Transverse colon (tissue), 4 donors: ENCODE measurements at regions of chr7 and their contacts with region 1.

Region 1: GRCh38 chr7:38796626-38797501 is 112.1 kb downstream of the VPS41 start:
- DNase-seq: peak; percentile 44
- H3K4me3 ChIP-seq: no peak overlapping the region
- H3K27ac ChIP-seq: no peak overlapping the region
- H3K4me1 ChIP-seq: no peaks in the 10 kb centered on the region
- H3K27me3 ChIP-seq: no peaks in the 10 kb centered on the region
- CTCF ChIP-seq: peak; percentile 63 to 79 (median 73)
- EP300 ChIP-seq: no peak
- POLR2A ChIP-seq: no peak

Region 2: GRCh38 chr7:38775506-38776175 is 21.2 kb before region 1 on chr7:
- in situ Hi-C with region 1: no loop called
- intact Hi-C with region 1: no loop called
- DNase-seq: no peak
- H3K4me3 ChIP-seq: no peak overlapping the region
- H3K27ac ChIP-seq: no peak overlapping the region
- H3K4me1 ChIP-seq: no peaks in the 10 kb centered on the region
- H3K27me3 ChIP-seq: no peaks in the 10 kb centered on the region
- CTCF ChIP-seq: no peak
- EP300 ChIP-seq: no peak
- POLR2A ChIP-seq: no peak

Region 3: DNA sequence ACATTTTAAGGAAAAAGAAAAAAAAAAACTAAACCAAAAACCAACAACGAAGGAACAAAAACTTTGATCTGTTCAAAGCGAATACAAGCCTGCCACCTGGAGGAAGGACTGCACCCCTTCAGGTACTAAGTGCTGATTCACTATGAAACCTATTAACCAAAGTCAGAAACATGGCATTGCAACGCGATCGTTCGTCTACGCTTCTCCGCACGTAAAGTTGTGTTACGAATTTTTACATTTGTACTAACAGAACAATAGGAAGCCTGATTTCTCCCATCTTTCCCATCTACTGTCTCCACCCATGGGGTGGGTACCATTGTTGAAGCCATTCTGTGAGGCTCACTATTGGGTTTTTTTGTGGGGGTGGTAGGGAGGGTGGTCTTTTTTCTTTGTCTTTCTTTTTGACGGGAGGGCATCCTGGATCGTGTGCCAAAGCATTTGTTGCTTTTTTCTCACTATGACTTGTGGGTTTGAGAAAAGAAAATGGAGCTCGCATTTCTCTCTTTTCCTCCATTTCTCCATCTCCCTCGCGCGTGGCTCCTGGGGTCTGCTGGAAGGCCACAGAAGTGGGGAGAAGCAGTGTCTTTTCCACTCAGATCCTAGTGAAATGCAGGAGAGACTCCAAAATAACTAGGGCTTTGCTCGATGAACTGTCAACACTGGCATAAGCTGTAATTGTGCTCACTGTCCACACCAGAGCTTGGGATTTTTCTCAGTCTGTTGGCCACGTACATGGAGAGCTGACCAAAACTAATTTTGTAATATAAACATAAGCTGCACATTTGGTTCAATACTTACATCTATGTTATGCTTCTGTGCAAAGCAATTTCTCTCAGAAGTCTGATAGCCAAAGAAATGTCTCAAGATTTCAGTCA is 668.4 kb after region 1 on chr7:
- in situ Hi-C with region 1: loop called in 2 of 4 experiments (anchors 25 kb)
- intact Hi-C with region 1: loop called (anchors 10 kb)
- DNase-seq: peak; percentile 50
- H3K4me3 ChIP-seq: peak overlapping the region in 1 of 4 donors; percentile 10
- H3K27ac ChIP-seq: no peak overlapping the region
- H3K4me1 ChIP-seq: peaks cover 0 to 20% (median 8%) of the 10 kb centered on the region in 4 donors
- H3K27me3 ChIP-seq: peaks cover 25% of the 10 kb centered on the region
- CTCF ChIP-seq: peak; percentile 71 to 78 (median 74)
- EP300 ChIP-seq: no peak
- POLR2A ChIP-seq: no peak

Region 4: DNA sequence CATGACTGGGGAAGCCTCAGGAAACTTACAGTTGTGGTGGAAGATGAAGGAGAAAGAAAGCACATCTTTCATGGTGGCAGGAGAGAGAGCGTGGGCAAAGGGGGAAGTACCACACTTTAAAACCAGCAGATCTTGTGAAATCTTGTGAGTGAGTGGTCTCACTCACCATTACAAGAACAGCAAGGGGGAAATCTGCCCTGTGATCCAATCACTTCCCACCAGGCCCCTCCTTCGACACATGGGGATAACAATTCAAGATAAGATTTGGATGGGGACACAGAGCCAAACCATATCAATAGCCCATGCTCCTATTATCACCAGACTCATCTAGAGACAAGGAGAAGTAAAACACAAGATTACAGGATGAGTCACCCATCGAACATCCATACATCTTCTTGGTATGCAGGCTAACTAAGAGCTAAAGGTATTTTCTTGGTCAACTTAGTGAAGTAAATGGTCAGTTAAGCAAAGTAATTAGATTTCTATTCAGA is 714.0 kb after region 1 on chr7:
- in situ Hi-C with region 1: loop called in 2 of 4 experiments (anchors 10 to 25 kb)
- intact Hi-C with region 1: no loop called
- DNase-seq: no peak
- H3K4me3 ChIP-seq: no peak overlapping the region
- H3K27ac ChIP-seq: no peak overlapping the region
- H3K4me1 ChIP-seq: no peaks in the 10 kb centered on the region
- H3K27me3 ChIP-seq: no peaks in the 10 kb centered on the region
- CTCF ChIP-seq: no peak
- EP300 ChIP-seq: no peak
- POLR2A ChIP-seq: no peak

Region 5: DNA sequence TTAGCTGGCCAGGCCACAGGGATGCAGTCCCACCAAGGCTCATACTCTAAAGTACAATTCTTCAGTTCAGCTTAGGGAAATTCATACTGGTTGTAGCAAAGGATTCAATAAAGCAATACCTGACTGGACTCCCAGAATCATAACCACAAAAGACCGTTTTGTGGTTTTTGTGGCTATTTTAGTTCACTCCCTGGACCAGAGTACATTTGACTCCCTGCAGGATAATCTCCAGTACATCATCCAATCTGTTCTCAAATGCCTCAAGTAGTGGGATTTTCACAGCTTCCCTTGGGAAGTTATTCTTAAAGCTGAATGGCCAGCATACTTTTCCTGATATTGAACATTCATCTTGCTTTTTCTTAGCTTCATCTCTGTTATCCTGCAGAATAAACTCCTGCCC is 740.1 kb after region 1 on chr7:
- in situ Hi-C with region 1: no loop called
- intact Hi-C with region 1: loop called (anchors 10 kb)
- DNase-seq: no peak
- H3K4me3 ChIP-seq: no peak overlapping the region
- H3K27ac ChIP-seq: no peak overlapping the region
- H3K4me1 ChIP-seq: peaks cover 0 to 33% (median 12%) of the 10 kb centered on the region in 4 donors
- H3K27me3 ChIP-seq: no peaks in the 10 kb centered on the region
- CTCF ChIP-seq: no peak
- EP300 ChIP-seq: no peak
- POLR2A ChIP-seq: no peak